ENCODE measurements at regions of chr16 and their contacts with region 1.

Region 1: DNA sequence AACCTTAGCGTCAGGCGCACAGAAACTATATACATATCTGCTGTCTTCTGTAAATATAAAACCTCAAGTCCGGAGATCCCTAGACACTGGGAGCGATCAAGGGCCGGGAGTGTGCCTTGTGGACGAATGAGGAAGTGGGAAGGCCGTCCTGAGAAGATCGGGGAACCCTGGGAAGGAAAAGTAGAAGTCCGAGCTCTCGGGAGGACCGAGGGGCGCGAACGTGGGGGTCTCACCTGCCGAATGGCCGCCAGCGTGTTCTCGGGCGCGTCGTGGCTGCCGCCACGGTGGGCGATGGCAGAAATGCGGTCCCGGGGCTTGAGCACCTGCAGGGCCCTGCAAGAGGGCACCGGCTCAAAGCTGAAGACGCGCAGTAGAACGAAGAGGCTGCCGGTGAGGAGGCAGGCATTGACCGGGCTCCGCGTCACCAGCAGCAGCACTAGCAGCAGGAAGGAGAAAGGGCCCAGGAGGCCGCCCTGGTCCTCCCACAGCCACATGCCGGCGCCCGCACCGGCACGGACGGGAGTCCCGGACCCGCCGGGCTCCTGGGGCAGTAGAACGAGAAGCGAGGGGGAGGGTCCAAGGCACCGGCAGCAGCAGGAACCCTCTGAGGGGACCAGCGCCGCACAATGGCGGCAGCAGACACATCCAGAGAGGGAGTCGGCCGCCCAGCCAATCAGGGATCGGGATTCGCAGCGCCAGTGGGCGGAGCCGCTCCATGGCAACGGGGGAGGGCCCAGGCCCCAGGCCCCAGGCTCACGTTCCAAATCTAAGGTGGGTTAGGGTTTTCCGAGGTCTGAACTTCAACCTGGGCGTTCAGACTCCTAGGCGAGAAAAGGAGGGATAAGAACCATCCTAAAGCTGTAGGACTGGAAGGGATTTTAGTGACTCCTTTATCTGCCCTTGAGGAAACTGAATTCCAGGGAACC is at the start of gene GDE1:
- H3K4me3 Mint-ChIP-seq: peak within 1 kb of the TSS; percentile 90
- H3K27ac Mint-ChIP-seq: peak within 1 kb of the TSS; percentile 96
- H3K4me1 Mint-ChIP-seq: peaks cover 55% of the 10 kb centered on the region
- H3K27me3 Mint-ChIP-seq: no peaks in the 10 kb centered on the region

Region 2: GRCh38 chr16:19555162-19555937 is 33.6 kb after region 1 on chr16 and contains the start of gene VPS35L:
- intact Hi-C with region 1: loop called (anchors 1 kb)
- H3K4me3 Mint-ChIP-seq: peak within 1 kb of the TSS; percentile 75
- H3K27ac Mint-ChIP-seq: peak within 1 kb of the TSS; percentile 92
- H3K4me1 Mint-ChIP-seq: peaks cover 24% of the 10 kb centered on the region
- H3K27me3 Mint-ChIP-seq: no peaks in the 10 kb centered on the region

Measured in dendritic cell treated with granulocyte-macrophage colony-stimulating factor and Interleukin-4, amounts not matched to agents 40 ng/mL and 50 ng/mL, for 4 days (primary cell).